ENCODE measurements at regions of chr15 and their contacts with region 1.

Region 1: GRCh38 chr15:90716976-90717821 is at the start of gene BLM:
- DNase-seq: peak; percentile 96
- H3K4me3 Mint-ChIP-seq: peak within 1 kb of the TSS; percentile 87
- H3K27ac Mint-ChIP-seq: peak within 1 kb of the TSS; percentile 91
- H3K4me1 Mint-ChIP-seq: peaks cover 21% of the 10 kb centered on the region
- H3K27me3 Mint-ChIP-seq: no peaks in the 10 kb centered on the region
- total RNA-seq, gene BLM: 58.9 and 65.3 TPM in 2 replicates

Region 2: GRCh38 chr15:90869601-90870353 is 152.6 kb after region 1 on chr15:
- intact Hi-C with region 1: no loop called
- DNase-seq: peak; percentile 31
- H3K4me3 Mint-ChIP-seq: peak overlapping the region; percentile 96
- H3K27ac Mint-ChIP-seq: peak overlapping the region; percentile 91
- H3K4me1 Mint-ChIP-seq: peaks cover 51% of the 10 kb centered on the region
- H3K27me3 Mint-ChIP-seq: no peaks in the 10 kb centered on the region

Region 3: DNA sequence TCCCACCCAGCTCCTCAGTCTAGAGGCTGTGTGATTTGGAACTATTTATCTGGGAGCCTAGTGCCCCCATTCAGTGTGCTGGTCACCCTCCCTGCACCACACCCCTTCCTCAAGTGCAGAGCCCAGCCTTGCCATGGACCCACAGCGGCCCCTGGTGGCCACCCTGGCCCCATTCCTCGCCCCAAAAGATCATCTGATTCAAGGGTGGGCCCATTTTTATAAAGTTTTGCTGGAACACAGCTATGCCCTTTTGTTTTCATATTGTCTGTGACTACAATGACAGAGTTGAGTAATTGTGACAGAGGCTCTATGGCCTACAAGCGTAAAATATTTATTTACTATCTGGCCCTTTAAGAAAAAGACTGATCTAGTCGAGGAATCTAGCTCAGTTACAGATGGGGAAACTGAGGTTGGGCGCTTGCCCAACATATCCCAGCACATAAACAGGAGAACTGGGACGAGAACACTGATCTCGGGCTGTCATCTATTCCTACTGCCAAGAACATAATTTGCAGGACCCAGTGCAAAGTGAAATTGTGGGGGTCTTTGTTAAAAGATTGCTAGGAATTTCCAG is 168.9 kb after region 1 on chr15:
- intact Hi-C with region 1: loop called (anchors 2 kb)
- DNase-seq: peak; percentile 72
- H3K4me3 Mint-ChIP-seq: no peak overlapping the region
- H3K27ac Mint-ChIP-seq: peak overlapping the region; percentile 66
- H3K4me1 Mint-ChIP-seq: peaks cover 30% of the 10 kb centered on the region
- H3K27me3 Mint-ChIP-seq: no peaks in the 10 kb centered on the region

Region 4: GRCh38 chr15:91426412-91426811 is 709.2 kb after region 1 on chr15:
- intact Hi-C with region 1: no loop called
- DNase-seq: no peak
- H3K4me3 Mint-ChIP-seq: no peak overlapping the region
- H3K27ac Mint-ChIP-seq: no peak overlapping the region
- H3K4me1 Mint-ChIP-seq: peaks cover 9% of the 10 kb centered on the region
- H3K27me3 Mint-ChIP-seq: peaks cover 8% of the 10 kb centered on the region

Measured in activated T-helper 2 cell treated with anti-CD3 and anti-CD28 coated beads, Interferon-gamma antibody, Interleukin-2, Interleukin-4, amounts not matched to agents 10 μg/mL and 5 μg/mL and 100 μg/mL, durations not matched to agents 14 hours and 24 hours and 36 hours (primary cell).